ENCODE measurements at regions of chr15 and their contacts with region 1.

Region 1: DNA sequence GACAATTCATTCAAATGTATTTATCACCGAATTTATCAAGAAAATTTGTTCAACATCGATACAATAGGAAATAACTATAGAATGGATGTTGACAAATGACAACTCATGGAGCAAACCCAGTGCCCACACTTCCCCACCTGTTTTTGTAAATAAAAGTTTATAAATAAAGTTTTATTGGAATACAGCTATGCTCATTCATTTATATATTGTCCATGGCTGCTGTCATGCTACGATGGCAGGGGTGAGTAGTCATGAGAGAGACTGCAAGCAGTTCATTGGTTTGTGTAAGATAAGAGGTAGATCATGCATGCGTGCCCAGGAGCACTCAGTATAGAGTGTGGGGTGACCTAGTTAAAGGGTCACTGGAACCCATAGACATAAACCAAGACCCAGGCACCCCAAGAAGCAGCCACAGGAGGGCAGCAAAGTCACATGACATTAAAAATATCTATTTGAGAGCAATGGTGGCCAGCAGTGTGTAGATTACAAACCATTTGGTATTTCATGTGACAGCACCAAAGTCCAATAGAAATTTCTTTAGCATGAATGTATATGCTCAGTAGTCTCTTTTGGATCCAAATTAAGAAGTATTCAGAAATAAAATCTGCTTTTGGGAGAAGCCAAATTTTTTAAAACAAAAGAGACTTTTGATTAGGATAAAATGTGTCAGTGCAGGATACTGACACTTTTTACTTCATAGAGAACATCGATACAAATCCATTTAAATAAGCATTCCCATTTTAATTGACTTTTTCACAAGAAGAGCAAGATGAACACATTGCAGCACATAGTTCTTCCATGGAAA is 794.8 kb downstream of the MCTP2 start:
- DNase-seq: peak; percentile 78
- H3K4me3 ChIP-seq: no peak overlapping the region
- H3K27ac ChIP-seq: no peak overlapping the region
- H3K4me1 ChIP-seq: peaks cover 2% of the 10 kb centered on the region
- H3K27me3 ChIP-seq: no peaks in the 10 kb centered on the region
- CTCF ChIP-seq: peak; percentile 62 to 76
- POLR2A ChIP-seq: no peak

Region 2: GRCh38 chr15:94412979-94413746 is 613.0 kb before region 1 on chr15:
- CTCF ChIA-PET with region 1: interaction called, 11 read pairs
- POLR2A ChIA-PET with region 1: no interaction called
- dilution Hi-C with region 1: no loop called
- intact Hi-C with region 1: no loop called
- DNase-seq: peak; percentile 47
- H3K4me3 ChIP-seq: no peak overlapping the region
- H3K27ac ChIP-seq: no peak overlapping the region
- H3K4me1 ChIP-seq: no peaks in the 10 kb centered on the region
- H3K27me3 ChIP-seq: no peaks in the 10 kb centered on the region
- CTCF ChIP-seq: peak in 1 of 2 donors; percentile 20
- POLR2A ChIP-seq: no peak

Region 3: GRCh38 chr15:95068701-95069521 is 42.8 kb after region 1 on chr15:
- CTCF ChIA-PET with region 1: no interaction called
- POLR2A ChIA-PET with region 1: no interaction called
- dilution Hi-C with region 1: no loop called
- intact Hi-C with region 1: no loop called
- DNase-seq: no peak
- H3K4me3 ChIP-seq: no peak overlapping the region
- H3K27ac ChIP-seq: no peak overlapping the region
- H3K4me1 ChIP-seq: no peaks in the 10 kb centered on the region
- H3K27me3 ChIP-seq: no peaks in the 10 kb centered on the region
- CTCF ChIP-seq: no peak
- POLR2A ChIP-seq: no peak

Region 4: GRCh38 chr15:95129574-95129973 is 103.4 kb after region 1 on chr15:
- CTCF ChIA-PET with region 1: interaction called, 5 read pairs
- POLR2A ChIA-PET with region 1: no interaction called
- dilution Hi-C with region 1: no loop called
- intact Hi-C with region 1: loop called (anchors 1 kb)
- DNase-seq: peak; percentile 16
- H3K4me3 ChIP-seq: no peak overlapping the region
- H3K27ac ChIP-seq: no peak overlapping the region
- H3K4me1 ChIP-seq: peaks cover 28% of the 10 kb centered on the region
- H3K27me3 ChIP-seq: no peaks in the 10 kb centered on the region
- CTCF ChIP-seq: no peak
- POLR2A ChIP-seq: no peak

Region 5: DNA sequence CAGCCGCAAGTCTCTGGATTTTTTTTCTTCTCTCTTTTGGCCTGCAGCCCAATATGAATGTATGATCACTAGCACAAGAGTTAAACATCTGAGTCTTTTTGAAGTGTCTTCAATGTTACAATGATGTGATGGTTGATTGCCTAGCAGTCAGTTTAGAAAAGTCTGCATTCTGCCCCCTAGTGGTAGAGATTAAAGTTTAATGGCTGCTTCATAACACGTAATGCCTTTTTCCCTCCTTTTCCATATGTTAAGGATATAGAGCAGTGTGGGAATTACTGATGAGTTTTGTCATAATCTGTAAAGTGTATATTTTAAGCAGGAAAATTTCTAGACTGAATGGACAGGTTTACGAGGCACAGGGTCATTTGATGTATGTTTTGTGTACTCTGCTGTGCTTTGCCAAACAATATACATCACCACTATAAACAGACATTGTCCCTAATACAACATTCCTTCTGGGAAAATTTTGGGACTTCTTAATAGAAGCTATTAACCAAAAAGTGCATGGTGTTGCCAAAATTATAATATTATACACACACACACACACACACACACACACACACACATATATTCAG is 265.9 kb after region 1 on chr15:
- CTCF ChIA-PET with region 1: interaction called, 9 read pairs
- POLR2A ChIA-PET with region 1: no interaction called
- dilution Hi-C with region 1: no loop called
- intact Hi-C with region 1: loop called (anchors 2 kb)
- DNase-seq: peak; percentile 61
- H3K4me3 ChIP-seq: no peak overlapping the region
- H3K27ac ChIP-seq: no peak overlapping the region
- H3K4me1 ChIP-seq: peaks cover 55% of the 10 kb centered on the region
- H3K27me3 ChIP-seq: no peaks in the 10 kb centered on the region
- CTCF ChIP-seq: peak; percentile 41 to 58
- POLR2A ChIP-seq: no peak

Region 6: GRCh38 chr15:95459273-95459672 is 433.1 kb after region 1 on chr15:
- CTCF ChIA-PET with region 1: no interaction called
- POLR2A ChIA-PET with region 1: no interaction called
- dilution Hi-C with region 1: no loop called
- intact Hi-C with region 1: loop called (anchors 10 kb)
- DNase-seq: peak; percentile 90
- H3K4me3 ChIP-seq: peak overlapping the region in 1 of 3 experiments; percentile 51
- H3K27ac ChIP-seq: peak overlapping the region; percentile 85
- H3K4me1 ChIP-seq: peaks cover 41% of the 10 kb centered on the region
- H3K27me3 ChIP-seq: no peaks in the 10 kb centered on the region
- CTCF ChIP-seq: no peak
- POLR2A ChIP-seq: peak; percentile 65

Region 7: GRCh38 chr15:96345560-96346399 is 1319.7 kb after region 1 on chr15:
- CTCF ChIA-PET with region 1: interaction called, 7 read pairs
- POLR2A ChIA-PET with region 1: no interaction called
- dilution Hi-C with region 1: no loop called
- intact Hi-C with region 1: loop called (anchors 5 kb)
- DNase-seq: peak; percentile 86
- H3K4me3 ChIP-seq: peak overlapping the region; percentile 16 to 99 (median 74)
- H3K27ac ChIP-seq: peak overlapping the region; percentile 87
- H3K4me1 ChIP-seq: peaks cover 83% of the 10 kb centered on the region
- H3K27me3 ChIP-seq: no peaks in the 10 kb centered on the region
- CTCF ChIP-seq: peak; percentile 22 to 33
- POLR2A ChIP-seq: no peak